A549 (cell line): ENCODE measurements at regions of chr6 and their contacts with region 1.

Region 1: GRCh38 chr6:122530440-122531046 is 58.9 kb upstream of the SERINC1 start:
- DNase-seq: peak; percentile 10 to 49
- ATAC-seq: peak; percentile 85 to 90; a peak in 5 of 6 replicates
- H3K4me3 ChIP-seq: no peak overlapping the region
- H3K27ac ChIP-seq: no peak overlapping the region
- H3K4me1 ChIP-seq: no peaks in the 10 kb centered on the region
- CTCF ChIP-seq: peak; percentile 61
- EP300 ChIP-seq: no peak
- POLR2A ChIP-seq: no peak
- RAD21 ChIP-seq: peak; percentile 64 to 74

Region 2: GRCh38 chr6:122381497-122382265 is 148.9 kb before region 1 on chr6:
- CTCF ChIA-PET with region 1: interaction called, 23 read pairs
- POLR2A ChIA-PET with region 1: no interaction called
- DNase-seq: peak; percentile 25 to 67
- ATAC-seq: peak; percentile 91
- H3K4me3 ChIP-seq: no peak overlapping the region
- H3K27ac ChIP-seq: no peak overlapping the region
- H3K4me1 ChIP-seq: no peaks in the 10 kb centered on the region
- CTCF ChIP-seq: peak; percentile 61
- EP300 ChIP-seq: no peak
- POLR2A ChIP-seq: no peak
- RAD21 ChIP-seq: peak; percentile 47 to 53

Region 3: DNA sequence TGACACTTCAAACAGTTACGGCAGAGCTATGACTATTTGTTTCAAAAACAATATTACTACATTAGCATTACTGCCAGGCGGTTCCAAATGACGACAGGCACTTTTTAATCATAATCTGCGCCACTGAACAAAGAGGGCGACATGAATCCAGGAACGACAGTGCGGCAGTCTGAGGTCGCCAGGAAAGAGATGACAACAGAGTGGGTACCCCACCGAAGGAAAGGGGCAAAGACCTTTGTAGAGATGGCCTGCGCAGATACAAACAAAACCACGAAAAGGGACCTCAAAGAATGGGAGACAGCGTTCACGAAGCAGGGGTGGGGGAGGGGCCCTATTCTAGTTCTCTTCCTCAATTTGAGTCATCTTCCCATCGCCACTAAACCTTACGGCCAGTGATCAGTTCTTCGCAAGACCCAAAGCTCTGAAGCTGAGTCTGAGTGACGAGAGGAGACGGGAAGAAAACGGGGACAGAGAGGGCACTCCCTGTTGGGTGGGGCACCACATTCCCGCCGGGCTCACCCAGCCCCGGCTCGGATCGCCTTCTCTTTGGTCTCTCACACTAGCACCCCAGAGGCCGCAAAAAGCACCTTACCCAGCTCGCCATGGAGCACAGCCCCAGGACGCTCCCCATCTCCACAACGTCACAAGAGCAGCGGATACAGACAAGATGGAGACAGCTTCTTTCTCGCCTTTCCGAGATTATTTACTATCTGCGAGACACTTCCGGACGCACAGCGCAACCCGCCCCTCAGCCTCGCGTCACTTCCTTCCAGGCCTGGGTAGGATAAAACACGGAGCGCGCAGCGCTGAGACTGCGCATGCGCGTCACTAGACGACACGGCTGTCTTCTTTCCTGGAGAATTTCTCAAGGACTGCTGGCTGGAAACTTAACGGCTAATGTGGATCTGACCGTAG is 59.2 kb before region 1 on chr6 and contains the start of gene SERINC1:
- CTCF ChIA-PET with region 1: interaction called, 20 read pairs
- POLR2A ChIA-PET with region 1: interaction called, 3 read pairs
- DNase-seq: peak; percentile 67 to 90
- ATAC-seq: peak; percentile 99
- H3K4me3 ChIP-seq: peak within 1 kb of the TSS; percentile 80
- H3K27ac ChIP-seq: peak within 1 kb of the TSS; percentile 80 to 87
- H3K4me1 ChIP-seq: 0 out of 3 replicates have a peak, but pooled peaks cover 5% of the 10 kb centered on the region
- CTCF ChIP-seq: no peak
- EP300 ChIP-seq: no peak
- POLR2A ChIP-seq: peak; percentile 63
- RAD21 ChIP-seq: no peak
- polyA plus RNA-seq, gene SERINC1: 85.8 and 112 TPM in 2 replicates

Region 4: DNA sequence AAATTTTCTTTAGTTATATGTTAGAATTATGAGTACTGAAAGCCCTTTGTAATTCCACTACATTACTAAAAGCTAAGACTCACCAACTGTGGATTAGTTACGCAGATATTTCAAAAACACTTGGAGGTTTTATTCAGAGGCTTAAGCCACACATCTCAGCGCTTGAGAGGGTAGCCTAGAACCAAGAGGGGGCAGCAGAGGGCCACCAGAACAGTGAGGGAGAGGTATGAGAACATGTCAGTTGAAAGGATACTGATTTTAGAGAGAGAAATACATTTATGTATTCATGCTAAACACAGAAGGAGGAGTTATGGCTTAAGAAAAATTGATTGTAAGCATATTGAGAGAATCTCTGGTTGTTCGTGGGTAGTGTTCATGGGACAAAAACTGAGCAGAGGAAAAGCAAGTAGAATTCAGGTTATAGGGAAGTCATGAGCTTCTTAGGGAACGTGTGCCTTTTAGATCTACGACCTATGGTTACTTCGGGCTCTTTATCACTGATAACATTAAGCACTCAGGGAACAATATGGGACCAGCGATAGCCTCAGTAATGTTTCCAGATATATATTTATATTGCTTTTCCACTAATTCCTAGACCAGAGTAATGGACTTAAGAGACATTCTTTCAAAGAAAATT is 38.5 kb before region 1 on chr6:
- CTCF ChIA-PET with region 1: interaction called, 61 read pairs
- POLR2A ChIA-PET with region 1: interaction called, 3 read pairs
- DNase-seq: peak; percentile 37 to 63
- ATAC-seq: peak; percentile 99 to 100
- H3K4me3 ChIP-seq: no peak overlapping the region
- H3K27ac ChIP-seq: no peak overlapping the region
- H3K4me1 ChIP-seq: no peaks in the 10 kb centered on the region
- CTCF ChIP-seq: peak; percentile 68
- EP300 ChIP-seq: no peak
- POLR2A ChIP-seq: no peak
- RAD21 ChIP-seq: peak; percentile 62 to 81

Region 5: DNA sequence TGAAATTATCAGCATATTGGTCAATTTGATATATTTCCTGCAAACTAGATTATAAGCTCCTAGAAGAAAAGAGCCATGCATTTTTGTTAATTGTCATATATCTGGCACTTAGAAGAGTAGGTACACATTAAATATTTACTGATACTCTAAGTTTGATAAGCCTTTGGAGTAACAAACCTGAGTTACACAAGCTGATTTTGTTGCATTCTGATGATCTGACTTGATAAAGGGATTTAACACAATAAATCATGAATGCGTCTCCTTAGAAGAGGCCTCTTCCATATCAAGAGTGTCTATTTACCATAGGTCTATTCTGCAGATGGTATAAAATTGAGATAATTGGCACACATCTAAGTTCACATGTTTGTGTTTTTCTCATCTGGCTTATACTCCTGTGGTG is 10.4 kb before region 1 on chr6:
- CTCF ChIA-PET with region 1: interaction called, 17 read pairs
- POLR2A ChIA-PET with region 1: no interaction called
- DNase-seq: no peak
- ATAC-seq: no peak
- H3K4me3 ChIP-seq: no peak overlapping the region
- H3K27ac ChIP-seq: no peak overlapping the region
- H3K4me1 ChIP-seq: no peaks in the 10 kb centered on the region
- CTCF ChIP-seq: no peak
- EP300 ChIP-seq: no peak
- POLR2A ChIP-seq: no peak
- RAD21 ChIP-seq: no peak